Ovary (tissue), 10 donors: ENCODE measurements at regions of chr3 and their contacts with region 1.

Region 1: GRCh38 chr3:101119535-101119934 is 126.3 kb upstream of the ABI3BP start:
- DNase-seq: no peak
- H3K4me3 ChIP-seq: no peak overlapping the region
- H3K27ac ChIP-seq: no peak overlapping the region
- H3K4me1 ChIP-seq: no peaks in the 10 kb centered on the region
- H3K27me3 ChIP-seq: no peaks in the 10 kb centered on the region
- CTCF ChIP-seq: no peak
- EP300 ChIP-seq: no peak
- POLR2A ChIP-seq: no peak

Region 2: DNA sequence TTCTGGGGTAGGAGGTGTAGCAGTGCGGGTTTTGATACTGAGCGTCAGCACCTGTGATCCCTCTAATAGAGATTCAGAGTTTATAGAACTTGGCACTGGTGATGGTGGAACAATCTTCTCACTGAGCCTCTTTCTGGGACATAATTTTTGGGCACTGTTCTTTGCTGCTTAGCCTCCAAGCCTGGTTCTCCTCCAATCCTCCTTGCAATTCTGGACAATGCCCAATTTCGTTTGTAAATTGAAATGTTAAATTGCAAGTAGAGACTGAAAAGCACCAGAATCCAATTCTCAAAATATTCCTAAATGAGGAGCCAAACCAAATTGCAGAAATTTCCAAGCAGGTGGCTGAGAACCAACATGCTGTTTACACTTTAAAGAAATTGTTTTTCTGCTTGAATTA is 23.5 kb after region 1 on chr3:
- intact Hi-C with region 1: loop called in 1 of 4 experiments (anchors 1 kb)
- DNase-seq: no peak
- H3K4me3 ChIP-seq: no peak overlapping the region
- H3K27ac ChIP-seq: no peak overlapping the region
- H3K4me1 ChIP-seq: no peaks in the 10 kb centered on the region
- H3K27me3 ChIP-seq: no peaks in the 10 kb centered on the region
- CTCF ChIP-seq: no peak
- EP300 ChIP-seq: no peak
- POLR2A ChIP-seq: no peak